Heart left ventricle (tissue), 16 donors: ENCODE measurements at regions of chr10 and their contacts with region 1.

Region 1: DNA sequence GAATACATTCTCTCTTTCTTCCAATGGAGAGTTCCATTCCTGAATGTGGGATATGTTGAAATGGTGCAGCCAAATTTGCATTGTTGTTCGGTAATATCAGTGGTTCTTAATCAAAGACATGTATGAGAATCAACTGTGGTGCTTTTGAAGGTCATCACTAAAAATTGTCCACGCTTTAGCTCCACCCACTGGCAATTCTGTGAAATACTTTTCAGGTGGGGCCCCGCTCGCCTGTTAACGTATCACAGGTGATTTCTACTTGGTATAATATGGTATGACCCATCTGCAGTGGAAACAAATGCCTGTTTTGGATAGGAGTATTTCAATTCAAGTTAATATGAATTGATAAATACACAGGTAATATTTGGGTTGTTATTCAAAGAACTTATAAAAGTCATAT is 178.4 kb downstream of the NSUN6 start:
- DNase-seq: peak in 2 of 5 donors; percentile 25 to 53
- ATAC-seq: peak in 3 of 4 donors; percentile 7 to 52 (median 40)
- H3K4me3 ChIP-seq: peak overlapping the region in 2 of 12 donors; percentile 9 to 16
- H3K27ac ChIP-seq: peak overlapping the region; percentile 76 to 93 (median 85)
- H3K4me1 ChIP-seq: peaks cover 0 to 36% (median 14%) of the 10 kb centered on the region in 12 donors
- H3K27me3 ChIP-seq: no peaks in the 10 kb centered on the region
- CTCF ChIP-seq: peak in 7 of 12 donors; percentile 10 to 39 (median 27)
- POLR2A ChIP-seq: no peak

Region 2: GRCh38 chr10:18409599-18410397 is 63.2 kb before region 1 on chr10:
- intact Hi-C with region 1: no loop called
- DNase-seq: no peak
- ATAC-seq: no peak
- H3K4me3 ChIP-seq: no peak overlapping the region
- H3K27ac ChIP-seq: peak overlapping the region in 1 of 12 donors; percentile 24
- H3K4me1 ChIP-seq: peaks cover 0 to 28% (median 3%) of the 10 kb centered on the region in 12 donors
- H3K27me3 ChIP-seq: no peaks in the 10 kb centered on the region
- CTCF ChIP-seq: no peak
- POLR2A ChIP-seq: no peak

Region 3: GRCh38 chr10:18438361-18439126 is 34.4 kb before region 1 on chr10:
- intact Hi-C with region 1: loop called in 1 of 10 experiments (anchors 2 kb)
- DNase-seq: peak in 4 of 5 donors; percentile 30 to 68 (median 45)
- ATAC-seq: peak; percentile 89 to 91 (median 89)
- H3K4me3 ChIP-seq: no peak overlapping the region
- H3K27ac ChIP-seq: peak overlapping the region; percentile 66 to 92 (median 84)
- H3K4me1 ChIP-seq: peaks cover 0 to 30% (median 0%) of the 10 kb centered on the region in 12 donors
- H3K27me3 ChIP-seq: no peaks in the 10 kb centered on the region
- CTCF ChIP-seq: no peak
- POLR2A ChIP-seq: no peak

Region 4: DNA sequence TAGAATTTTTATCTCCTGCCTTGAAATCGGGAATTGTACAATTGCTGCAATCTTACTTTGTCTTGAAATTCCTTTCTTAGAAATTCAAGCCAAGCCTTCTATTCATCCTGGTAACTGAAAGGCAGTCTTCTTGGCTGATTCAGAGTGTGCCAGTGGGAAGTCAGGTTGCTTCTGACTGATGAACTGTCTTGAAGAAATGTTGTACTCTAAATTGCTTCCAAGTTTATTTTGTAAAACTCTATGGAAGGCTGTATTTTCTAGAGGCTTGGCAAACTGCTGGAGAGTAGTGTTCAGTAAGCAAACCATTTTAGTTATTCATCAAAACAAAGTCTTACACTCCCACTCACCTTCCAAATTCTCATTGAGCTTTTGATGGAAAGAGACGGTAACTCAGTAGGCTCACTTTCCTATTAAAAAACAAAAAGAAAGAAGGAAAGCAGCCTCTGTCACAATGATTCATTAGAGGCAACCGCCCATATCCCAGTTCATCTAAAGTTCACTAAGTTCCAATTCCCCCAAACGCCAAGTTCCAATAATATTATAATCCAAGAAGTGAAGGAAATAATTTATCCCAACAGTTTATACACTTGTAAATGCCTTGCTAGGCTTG is 387.8 kb after region 1 on chr10:
- intact Hi-C with region 1: no loop called
- DNase-seq: no peak
- ATAC-seq: no peak
- H3K4me3 ChIP-seq: no peak overlapping the region
- H3K27ac ChIP-seq: no peak overlapping the region
- H3K4me1 ChIP-seq: no peaks in the 10 kb centered on the region
- H3K27me3 ChIP-seq: no peaks in the 10 kb centered on the region
- CTCF ChIP-seq: no peak
- POLR2A ChIP-seq: no peak